ENCODE measurements at regions of chr11 and their contacts with region 1.

Region 1: GRCh38 chr11:117426269-117426685 is 98.6 kb downstream of the CEP164 start:
- DNase-seq: peak; percentile 49 to 89 (median 70)
- ATAC-seq: peak; percentile 92
- H3K4me3 ChIP-seq: no peak overlapping the region
- H3K27ac ChIP-seq: no peak overlapping the region
- H3K4me1 ChIP-seq: peaks cover 0 to 3% of the 10 kb centered on the region in 2 donors
- H3K27me3 ChIP-seq: peaks cover 0 to 6% of the 10 kb centered on the region in 2 donors
- CTCF ChIP-seq: peak; percentile 84 to 88

Region 2: DNA sequence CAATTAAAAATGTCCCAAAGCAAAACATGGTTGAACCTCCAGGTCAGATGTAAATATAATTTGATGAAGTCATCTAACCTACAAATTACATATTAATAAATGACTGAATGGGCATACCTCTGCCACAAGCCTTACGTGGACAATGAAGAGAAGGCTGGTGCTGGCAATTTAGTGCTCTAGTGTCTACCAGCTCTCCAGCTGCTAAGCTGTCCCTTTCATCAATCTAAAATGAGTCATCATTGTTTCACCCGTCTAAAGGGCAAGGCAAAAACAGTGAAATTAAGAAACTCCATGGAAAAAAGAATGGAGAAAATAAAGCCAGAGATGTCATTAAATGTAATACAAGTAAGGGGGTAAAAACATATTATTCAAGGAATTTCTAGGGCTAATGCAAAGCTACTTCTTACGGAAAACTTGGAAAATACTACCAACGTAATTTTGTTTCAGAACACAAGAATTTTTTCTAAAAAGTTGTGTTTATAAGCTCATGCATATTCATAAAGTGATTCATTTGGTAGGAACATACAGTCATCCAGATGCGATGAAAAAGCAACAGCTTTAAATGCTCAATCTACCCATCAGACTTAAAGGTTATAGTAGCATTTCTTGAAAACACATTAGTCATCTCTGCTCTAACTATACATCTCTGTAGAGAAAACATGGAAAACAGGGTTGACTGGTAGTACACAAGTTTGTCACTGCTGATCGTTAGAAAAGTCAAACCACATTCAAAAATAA is 399.5 kb before region 1 on chr11:
- intact Hi-C with region 1: no loop called
- DNase-seq: no peak
- ATAC-seq: peak; percentile 35
- H3K4me3 ChIP-seq: no peak overlapping the region
- H3K27ac ChIP-seq: no peak overlapping the region
- H3K4me1 ChIP-seq: peaks cover 0 to 38% of the 10 kb centered on the region in 2 donors
- H3K27me3 ChIP-seq: no peaks in the 10 kb centered on the region
- CTCF ChIP-seq: no peak

Region 3: DNA sequence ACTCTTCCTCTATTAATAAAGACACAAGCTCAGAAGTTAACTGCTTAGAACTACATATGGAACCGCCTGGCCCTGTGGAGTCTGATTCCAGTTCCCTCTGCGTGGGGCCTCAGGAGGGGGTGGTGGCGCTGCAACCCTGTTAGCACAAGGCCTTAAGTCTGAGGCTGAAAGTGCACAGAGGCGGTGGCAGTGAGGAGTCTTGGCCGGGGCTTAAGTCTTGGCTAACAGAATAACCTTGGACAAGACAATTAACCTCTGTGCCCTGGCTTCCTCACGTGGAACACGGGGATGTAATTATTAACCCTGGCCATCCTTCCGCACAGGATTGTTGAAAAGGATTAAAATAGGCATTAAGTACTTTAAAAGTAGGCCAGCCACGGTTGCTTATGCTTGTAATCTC is 92.9 kb after region 1 on chr11:
- intact Hi-C with region 1: no loop called
- DNase-seq: peak in 1 of 4 donors; percentile 19
- ATAC-seq: peak; percentile 57
- H3K4me3 ChIP-seq: no peak overlapping the region
- H3K27ac ChIP-seq: peak overlapping the region in 1 of 2 donors; percentile 19
- H3K4me1 ChIP-seq: no peaks in the 10 kb centered on the region
- H3K27me3 ChIP-seq: no peaks in the 10 kb centered on the region
- CTCF ChIP-seq: no peak

Region 4: GRCh38 chr11:117807482-117808327 is 381.4 kb after region 1 on chr11:
- intact Hi-C with region 1: loop called in 1 of 2 experiments (anchors 10 kb)
- DNase-seq: peak in 3 of 4 donors; percentile 67 to 88 (median 86)
- ATAC-seq: peak; percentile 84
- H3K4me3 ChIP-seq: no peak overlapping the region
- H3K27ac ChIP-seq: no peak overlapping the region
- H3K4me1 ChIP-seq: peaks cover 0 to 43% of the 10 kb centered on the region in 2 donors
- H3K27me3 ChIP-seq: no peaks in the 10 kb centered on the region
- CTCF ChIP-seq: peak; percentile 91 to 94